Aorta (tissue), 5 donors: ENCODE measurements at regions of chr7 and their contacts with region 1.

Region 1: DNA sequence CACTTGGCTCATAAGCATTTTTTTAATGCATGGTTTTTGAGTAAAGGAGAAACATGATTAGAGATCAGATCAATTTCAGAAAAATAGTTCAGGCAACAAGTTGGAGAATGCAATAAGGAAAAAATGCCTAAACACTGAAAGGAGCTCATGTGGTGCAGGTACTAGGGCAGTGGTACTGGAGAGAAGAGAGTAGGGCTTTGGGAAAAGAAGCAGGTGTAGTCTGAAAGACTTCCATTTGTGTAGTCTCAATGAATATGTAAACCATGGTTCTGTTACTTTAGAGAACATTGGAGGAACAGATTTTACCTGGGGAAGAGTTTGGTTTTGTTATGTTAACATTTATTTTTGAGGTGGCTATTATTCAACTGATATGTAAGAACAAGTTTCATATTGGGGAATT is 5.5 kb downstream of the GTPBP10 start:
- DNase-seq: no peak
- ATAC-seq: no peak
- H3K4me3 ChIP-seq: no peak overlapping the region
- H3K27ac ChIP-seq: no peak overlapping the region
- H3K4me1 ChIP-seq: no peaks in the 10 kb centered on the region
- H3K27me3 ChIP-seq: no peaks in the 10 kb centered on the region

Region 2: GRCh38 chr7:90540406-90540805 is 188.4 kb after region 1 on chr7:
- intact Hi-C with region 1: no loop called
- DNase-seq: no peak
- ATAC-seq: no peak
- H3K4me3 ChIP-seq: no peak overlapping the region
- H3K27ac ChIP-seq: no peak overlapping the region
- H3K4me1 ChIP-seq: no peaks in the 10 kb centered on the region
- H3K27me3 ChIP-seq: no peaks in the 10 kb centered on the region

Region 3: DNA sequence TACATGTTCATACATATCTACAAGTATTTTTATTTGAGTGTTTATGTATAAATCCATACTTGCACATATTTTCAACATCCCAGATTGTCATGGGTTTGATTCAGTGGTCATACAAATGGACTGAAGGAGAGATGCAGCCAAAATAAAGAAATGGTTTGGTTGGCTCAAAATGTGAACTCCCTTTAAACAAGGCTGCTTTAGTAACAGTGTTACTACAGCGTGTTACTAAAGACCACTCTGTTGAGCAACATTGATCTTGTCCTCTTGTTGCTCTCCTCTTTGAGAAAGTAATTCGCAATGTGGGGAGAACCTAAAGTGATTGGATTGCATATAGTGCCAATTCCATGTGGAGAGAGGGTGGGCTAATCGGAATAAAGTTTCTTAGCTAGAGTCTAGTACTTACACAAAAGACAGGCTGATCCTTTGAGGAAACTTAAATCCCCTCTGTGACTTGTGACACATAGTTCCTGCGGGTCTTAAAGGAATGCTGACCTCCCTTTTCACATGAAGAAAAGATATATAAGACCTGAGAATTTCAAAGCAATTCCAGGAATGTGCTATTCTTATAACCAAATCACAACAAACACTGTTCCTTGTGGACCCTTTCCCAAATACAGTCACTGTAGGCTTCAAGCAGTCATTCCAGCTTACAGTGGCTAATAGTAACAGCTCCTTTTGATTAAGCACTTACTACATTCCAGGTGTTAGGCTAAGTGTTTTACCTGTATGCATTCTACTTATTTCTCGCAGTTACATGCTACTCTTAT is 1056.6 kb after region 1 on chr7:
- intact Hi-C with region 1: loop called in 1 of 2 experiments (anchors 10 kb)
- DNase-seq: no peak
- ATAC-seq: peak; percentile 78
- H3K4me3 ChIP-seq: no peak overlapping the region
- H3K27ac ChIP-seq: peak overlapping the region in 1 of 2 donors; percentile 36
- H3K4me1 ChIP-seq: peaks cover 8 to 10% of the 10 kb centered on the region in 2 donors
- H3K27me3 ChIP-seq: no peaks in the 10 kb centered on the region